B cell (primary cell): ENCODE measurements at regions of chr17 and their contacts with region 1.

Region 1: GRCh38 chr17:27455914-27456680 is at the start of gene KSR1:
- DNase-seq: peak; percentile 89
- ATAC-seq: peak; percentile 94
- H3K4me3 ChIP-seq: peak within 1 kb of the TSS; percentile 21 to 76 (median 66)
- H3K4me3 Mint-ChIP-seq: peak within 1 kb of the TSS; percentile 94
- H3K27ac ChIP-seq: peak within 1 kb of the TSS in 1 of 2 donors; percentile 62
- H3K27ac Mint-ChIP-seq: peak within 1 kb of the TSS; percentile 88
- H3K4me1 ChIP-seq: peaks cover 16 to 23% of the 10 kb centered on the region in 2 donors
- H3K4me1 Mint-ChIP-seq: peaks cover 21% of the 10 kb centered on the region
- H3K27me3 ChIP-seq: no peaks in the 10 kb centered on the region
- H3K27me3 Mint-ChIP-seq: no peaks in the 10 kb centered on the region
- CTCF ChIP-seq: peak; percentile 29
- total RNA-seq, gene KSR1: 78.1 and 85.6 TPM in 2 replicates

Region 2: GRCh38 chr17:27091043-27091497 is 365.0 kb before region 1 on chr17:
- CTCF ChIA-PET with region 1: no interaction called
- POLR2A ChIA-PET with region 1: no interaction called
- intact Hi-C with region 1: no loop called
- DNase-seq: no peak
- ATAC-seq: no peak
- H3K4me3 ChIP-seq: no peak overlapping the region
- H3K4me3 Mint-ChIP-seq: no peak overlapping the region
- H3K27ac ChIP-seq: no peak overlapping the region
- H3K27ac Mint-ChIP-seq: no peak overlapping the region
- H3K4me1 ChIP-seq: no peaks in the 10 kb centered on the region
- H3K4me1 Mint-ChIP-seq: no peaks in the 10 kb centered on the region
- H3K27me3 ChIP-seq: no peaks in the 10 kb centered on the region
- H3K27me3 Mint-ChIP-seq: peaks cover 30% of the 10 kb centered on the region
- CTCF ChIP-seq: no peak

Region 3: GRCh38 chr17:27293898-27294688 is 162.0 kb before region 1 on chr17 and contains the start of gene WSB1:
- CTCF ChIA-PET with region 1: interaction called, 3 read pairs
- POLR2A ChIA-PET with region 1: no interaction called
- intact Hi-C with region 1: loop called (anchors 1 kb)
- DNase-seq: peak; percentile 97
- ATAC-seq: peak; percentile 86
- H3K4me3 ChIP-seq: peak within 1 kb of the TSS; percentile 89 to 100 (median 96)
- H3K4me3 Mint-ChIP-seq: peak within 1 kb of the TSS; percentile 89
- H3K27ac ChIP-seq: peak within 1 kb of the TSS; percentile 99
- H3K27ac Mint-ChIP-seq: peak within 1 kb of the TSS; percentile 99
- H3K4me1 ChIP-seq: peaks cover 37 to 39% of the 10 kb centered on the region in 2 donors
- H3K4me1 Mint-ChIP-seq: peaks cover 45% of the 10 kb centered on the region
- H3K27me3 ChIP-seq: no peaks in the 10 kb centered on the region
- H3K27me3 Mint-ChIP-seq: no peaks in the 10 kb centered on the region
- CTCF ChIP-seq: no peak
- total RNA-seq, gene WSB1: 215 and 217 TPM in 2 replicates

Region 4: GRCh38 chr17:27381007-27381501 is 75.0 kb before region 1 on chr17:
- CTCF ChIA-PET with region 1: interaction called, 5 read pairs
- POLR2A ChIA-PET with region 1: no interaction called
- intact Hi-C with region 1: loop called (anchors 5 kb)
- DNase-seq: peak; percentile 79
- ATAC-seq: peak; percentile 95
- H3K4me3 ChIP-seq: no peak overlapping the region
- H3K4me3 Mint-ChIP-seq: no peak overlapping the region
- H3K27ac ChIP-seq: no peak overlapping the region
- H3K27ac Mint-ChIP-seq: no peak overlapping the region
- H3K4me1 ChIP-seq: peaks cover 0 to 4% of the 10 kb centered on the region in 2 donors
- H3K4me1 Mint-ChIP-seq: peaks cover 6% of the 10 kb centered on the region
- H3K27me3 ChIP-seq: peaks cover 0 to 20% (median 3%) of the 10 kb centered on the region in 4 experiments
- H3K27me3 Mint-ChIP-seq: peaks cover 18% of the 10 kb centered on the region
- CTCF ChIP-seq: peak; percentile 97

Region 5: DNA sequence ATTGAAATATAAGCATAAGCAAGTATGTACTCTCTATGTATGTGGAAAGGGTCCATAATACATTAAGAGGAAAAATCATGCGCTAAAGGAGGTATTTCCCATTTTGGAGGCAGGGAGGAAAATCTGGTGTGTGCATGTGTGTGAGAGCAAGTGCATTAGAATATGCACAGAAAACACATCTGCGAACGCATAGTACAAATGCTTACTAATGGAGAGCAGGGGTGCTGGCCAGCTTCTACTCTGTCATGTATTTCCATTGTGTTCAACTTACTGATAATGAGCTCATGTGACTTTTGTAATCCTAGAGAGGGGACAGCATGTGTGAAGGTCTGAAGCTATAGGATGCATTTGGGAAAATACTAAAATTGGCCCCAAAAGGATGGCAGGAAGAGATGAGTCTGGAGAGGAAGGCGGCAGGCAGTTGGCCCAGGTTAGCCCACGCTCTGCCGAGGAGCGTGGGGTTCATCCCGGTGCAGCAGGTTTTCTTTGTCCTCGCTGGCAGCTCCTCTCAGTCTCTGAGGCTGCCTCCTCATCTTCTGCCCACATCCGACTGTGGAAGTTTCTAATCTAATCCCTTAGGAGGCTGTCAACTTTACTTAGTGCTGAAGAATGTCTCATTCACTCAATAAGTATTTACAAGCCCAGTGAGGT is 17.6 kb before region 1 on chr17:
- CTCF ChIA-PET with region 1: no interaction called
- POLR2A ChIA-PET with region 1: no interaction called
- intact Hi-C with region 1: no loop called
- DNase-seq: no peak
- ATAC-seq: no peak
- H3K4me3 ChIP-seq: no peak overlapping the region
- H3K4me3 Mint-ChIP-seq: no peak overlapping the region
- H3K27ac ChIP-seq: no peak overlapping the region
- H3K27ac Mint-ChIP-seq: no peak overlapping the region
- H3K4me1 ChIP-seq: no peaks in the 10 kb centered on the region
- H3K4me1 Mint-ChIP-seq: no peaks in the 10 kb centered on the region
- H3K27me3 ChIP-seq: no peaks in the 10 kb centered on the region
- H3K27me3 Mint-ChIP-seq: peaks cover 3% of the 10 kb centered on the region
- CTCF ChIP-seq: no peak

Region 6: GRCh38 chr17:27506348-27507231 is 50.5 kb after region 1 on chr17:
- CTCF ChIA-PET with region 1: no interaction called
- POLR2A ChIA-PET with region 1: no interaction called
- intact Hi-C with region 1: loop called (anchors 5 kb)
- DNase-seq: peak; percentile 69
- ATAC-seq: peak; percentile 87
- H3K4me3 ChIP-seq: peak overlapping the region in 2 of 5 experiments; percentile 18 to 33
- H3K4me3 Mint-ChIP-seq: peak overlapping the region; percentile 80
- H3K27ac ChIP-seq: peak overlapping the region; percentile 50 to 65
- H3K27ac Mint-ChIP-seq: peak overlapping the region; percentile 88
- H3K4me1 ChIP-seq: peaks cover 21 to 39% of the 10 kb centered on the region in 2 donors
- H3K4me1 Mint-ChIP-seq: peaks cover 51% of the 10 kb centered on the region
- H3K27me3 ChIP-seq: no peaks in the 10 kb centered on the region
- H3K27me3 Mint-ChIP-seq: no peaks in the 10 kb centered on the region
- CTCF ChIP-seq: no peak

Region 7: DNA sequence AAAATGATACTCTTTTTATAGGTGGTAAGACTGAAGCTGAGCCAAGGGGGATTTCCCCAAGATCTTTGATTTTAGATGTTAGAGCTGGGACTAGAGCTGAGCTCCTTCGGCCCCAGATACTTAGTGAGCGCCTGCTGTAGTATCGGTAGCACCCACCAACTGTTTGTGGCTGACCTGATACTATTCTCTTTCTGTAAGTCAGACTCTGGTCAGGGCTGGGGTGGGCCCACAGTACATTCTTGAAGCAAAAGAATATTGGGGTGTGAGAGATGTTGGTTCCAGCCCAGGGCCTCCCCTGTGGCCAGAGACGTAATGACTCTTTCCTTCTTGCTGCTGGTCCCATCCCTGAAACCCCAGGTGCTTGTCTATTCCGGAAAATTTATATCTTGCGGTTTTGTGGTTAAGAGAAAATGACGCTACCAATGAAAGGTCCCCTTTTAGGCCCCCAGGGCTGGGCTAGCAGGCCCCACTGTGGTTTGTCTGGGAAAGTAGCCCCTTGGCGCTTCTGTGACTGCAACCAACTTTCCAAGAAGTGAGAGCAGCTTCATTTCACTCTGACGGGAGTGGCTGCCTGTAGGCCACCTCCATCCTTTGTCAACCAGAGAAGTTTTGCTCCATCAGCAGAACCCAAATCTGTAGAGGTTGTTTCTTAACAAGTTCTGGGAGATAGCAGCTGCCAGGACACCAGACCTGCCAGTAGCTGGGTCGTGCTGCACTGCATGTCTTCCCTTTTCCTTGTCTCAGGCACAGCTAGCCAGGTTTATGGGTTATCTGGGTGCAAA is 88.4 kb after region 1 on chr17:
- CTCF ChIA-PET with region 1: interaction called, 3 read pairs
- POLR2A ChIA-PET with region 1: interaction called, 3 read pairs
- intact Hi-C with region 1: loop called (anchors 5 kb)
- DNase-seq: peak; percentile 70
- ATAC-seq: peak; percentile 84
- H3K4me3 ChIP-seq: no peak overlapping the region
- H3K4me3 Mint-ChIP-seq: peak overlapping the region; percentile 75
- H3K27ac ChIP-seq: peak overlapping the region; percentile 6 to 28
- H3K27ac Mint-ChIP-seq: peak overlapping the region; percentile 87
- H3K4me1 ChIP-seq: peaks cover 58 to 65% of the 10 kb centered on the region in 2 donors
- H3K4me1 Mint-ChIP-seq: peaks cover 72% of the 10 kb centered on the region
- H3K27me3 ChIP-seq: no peaks in the 10 kb centered on the region
- H3K27me3 Mint-ChIP-seq: no peaks in the 10 kb centered on the region
- CTCF ChIP-seq: no peak

Region 8: GRCh38 chr17:27793168-27793905 is 337.2 kb after region 1 on chr17:
- CTCF ChIA-PET with region 1: no interaction called
- POLR2A ChIA-PET with region 1: no interaction called
- intact Hi-C with region 1: no loop called
- DNase-seq: peak; percentile 19
- ATAC-seq: peak; percentile 45
- H3K4me3 ChIP-seq: peak overlapping the region in 3 of 5 experiments; percentile 27 to 36 (median 29)
- H3K4me3 Mint-ChIP-seq: peak overlapping the region; percentile 44
- H3K27ac ChIP-seq: no peak overlapping the region
- H3K27ac Mint-ChIP-seq: no peak overlapping the region
- H3K4me1 ChIP-seq: peaks cover 6 to 7% of the 10 kb centered on the region in 2 donors
- H3K4me1 Mint-ChIP-seq: peaks cover 4% of the 10 kb centered on the region
- H3K27me3 ChIP-seq: peaks cover 0 to 46% (median 17%) of the 10 kb centered on the region in 4 experiments
- H3K27me3 Mint-ChIP-seq: peaks cover 55% of the 10 kb centered on the region
- CTCF ChIP-seq: no peak